Naive thymus-derived CD8-positive, alpha-beta T cell (primary cell): ENCODE measurements at regions of chr16 and their contacts with region 1.

Region 1: GRCh38 chr16:46973207-46973995 is at the start of gene DNAJA2:
- DNase-seq: peak; percentile 83 to 94 (median 93)
- ATAC-seq: peak; percentile 84 to 89
- H3K4me3 Mint-ChIP-seq: peak within 1 kb of the TSS; percentile 88 to 100 (median 96)
- H3K27ac Mint-ChIP-seq: peak within 1 kb of the TSS; percentile 93 to 100 (median 99)
- H3K4me1 Mint-ChIP-seq: peaks cover 17 to 60% (median 57%) of the 10 kb centered on the region in 4 donors
- H3K27me3 Mint-ChIP-seq: no peaks in the 10 kb centered on the region
- polyA plus RNA-seq, gene DNAJA2: 62.5 to 83.7 (median 62.8) TPM

Region 2: GRCh38 chr16:46757339-46758050 is 215.9 kb before region 1 on chr16:
- POLR2A ChIA-PET with region 1: no interaction called
- DNase-seq: no peak
- ATAC-seq: no peak
- H3K4me3 Mint-ChIP-seq: no peak overlapping the region
- H3K27ac Mint-ChIP-seq: no peak overlapping the region
- H3K4me1 Mint-ChIP-seq: no peaks in the 10 kb centered on the region
- H3K27me3 Mint-ChIP-seq: peaks cover 0 to 21% (median 4%) of the 10 kb centered on the region in 5 donors

Region 3: DNA sequence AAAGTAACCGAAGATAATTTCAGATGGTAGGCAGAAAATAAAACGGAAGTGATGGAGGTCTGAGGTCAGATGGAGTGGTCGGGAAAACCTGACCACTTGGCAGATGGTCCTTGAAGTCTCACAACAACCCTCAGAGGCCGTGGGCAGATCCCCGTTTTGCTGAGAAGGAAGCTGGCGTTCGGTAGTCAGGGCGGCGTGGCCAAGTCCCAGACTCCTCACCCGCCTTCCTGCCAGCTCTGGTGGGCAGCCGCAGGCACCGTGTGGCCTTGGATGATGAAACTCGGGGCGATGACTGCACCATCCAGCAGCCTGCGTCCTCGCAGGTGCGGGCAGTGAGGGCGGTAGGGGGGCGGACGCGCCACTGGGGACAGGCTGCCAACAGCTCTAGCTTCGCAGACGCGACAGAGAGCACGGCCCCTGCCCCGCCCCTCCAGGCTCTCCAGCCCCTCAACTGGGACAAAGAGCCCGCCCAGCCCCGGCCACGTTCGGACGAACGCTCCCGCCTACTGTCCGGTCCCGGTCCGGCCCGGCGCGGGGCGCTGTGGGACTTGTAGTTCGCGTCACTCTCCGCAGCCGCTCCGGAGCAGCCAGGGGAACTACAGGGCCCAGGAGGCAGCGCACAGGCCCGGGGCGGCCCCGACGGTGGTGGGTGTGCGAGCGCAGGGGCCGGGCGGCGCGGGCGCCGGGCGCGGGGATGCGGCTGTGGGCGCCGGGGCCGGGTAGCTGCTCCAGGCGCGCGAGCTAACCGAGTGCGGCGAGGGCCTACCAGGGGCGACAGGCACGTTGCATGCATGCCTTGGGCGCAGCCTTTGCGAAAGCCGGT is 89.5 kb before region 1 on chr16 and contains the start of gene GPT2:
- POLR2A ChIA-PET with region 1: interaction called, 10 read pairs
- DNase-seq: peak; percentile 25 to 76 (median 46)
- ATAC-seq: peak; percentile 89 to 95
- H3K4me3 Mint-ChIP-seq: peak within 1 kb of the TSS; percentile 79 to 95 (median 90)
- H3K27ac Mint-ChIP-seq: peak within 1 kb of the TSS in 7 of 10 donors; percentile 15 to 79 (median 61)
- H3K4me1 Mint-ChIP-seq: peaks cover 9 to 17% (median 13%) of the 10 kb centered on the region in 4 donors
- H3K27me3 Mint-ChIP-seq: peaks cover 2 to 30% (median 13%) of the 10 kb centered on the region in 5 donors
- polyA plus RNA-seq, gene GPT2: 0.19 to 0.23 TPM in 2 of 3 donors, not detected in the other

Region 4: DNA sequence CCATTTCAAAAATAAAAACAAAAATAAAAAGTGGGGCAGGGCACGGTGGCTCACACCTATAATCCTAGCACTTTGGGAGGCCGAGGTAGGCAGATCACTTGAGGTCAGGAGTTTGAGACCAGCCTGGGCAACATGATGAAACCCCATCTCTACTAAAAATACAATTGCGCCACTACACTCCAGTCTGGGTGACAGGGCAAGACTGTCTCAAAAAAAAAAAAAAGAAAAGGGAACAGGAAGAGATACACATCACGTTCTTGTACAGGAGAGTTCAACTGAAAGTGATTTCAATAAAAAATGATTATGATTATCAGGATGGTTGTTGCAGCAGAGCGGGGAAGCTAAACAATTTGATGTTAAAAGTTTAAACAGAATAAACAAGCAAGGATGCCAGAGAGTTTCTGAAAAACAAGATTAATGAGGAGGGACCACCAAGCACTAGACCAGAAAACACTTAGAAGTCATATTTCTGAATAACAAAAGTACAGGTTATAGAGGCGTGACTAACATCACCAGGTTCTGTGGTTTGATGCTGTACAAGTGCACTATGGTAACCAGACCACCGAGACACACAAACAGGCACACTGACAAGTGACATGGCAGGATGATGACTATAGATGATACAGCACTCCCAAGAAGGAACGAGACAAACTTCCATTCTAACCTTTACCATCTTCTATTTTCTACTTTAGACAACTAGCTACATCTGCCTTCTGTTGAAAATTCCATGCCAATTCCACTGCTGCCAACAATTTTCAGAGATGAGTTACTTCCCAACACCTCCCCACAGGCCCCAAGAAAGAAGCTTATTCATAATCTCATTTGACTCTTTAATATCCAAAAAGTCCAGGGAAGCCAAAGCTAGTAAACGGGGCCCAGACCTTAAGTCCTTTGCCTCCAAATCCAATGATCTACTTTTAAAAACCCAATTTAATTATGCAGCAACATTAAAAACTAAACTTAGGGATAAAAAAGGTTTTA is 11.7 kb before region 1 on chr16:
- POLR2A ChIA-PET with region 1: interaction called, 16 read pairs
- DNase-seq: peak in 6 of 10 donors; percentile 7 to 63 (median 44)
- ATAC-seq: peak; percentile 86 to 97
- H3K4me3 Mint-ChIP-seq: peak overlapping the region in 9 of 10 donors; percentile 21 to 65 (median 47)
- H3K27ac Mint-ChIP-seq: peak overlapping the region; percentile 82 to 96 (median 90)
- H3K4me1 Mint-ChIP-seq: peaks cover 23 to 44% (median 40%) of the 10 kb centered on the region in 4 donors
- H3K27me3 Mint-ChIP-seq: no peaks in the 10 kb centered on the region

Region 5: GRCh38 chr16:47037746-47038458 is 64.5 kb after region 1 on chr16:
- POLR2A ChIA-PET with region 1: interaction called, 15 read pairs
- DNase-seq: peak; percentile 73 to 92 (median 87)
- ATAC-seq: peak; percentile 96 to 97
- H3K4me3 Mint-ChIP-seq: peak overlapping the region; percentile 67 to 85 (median 76)
- H3K27ac Mint-ChIP-seq: peak overlapping the region in 2 of 10 donors; percentile 31 to 60
- H3K4me1 Mint-ChIP-seq: peaks cover 0 to 6% (median 1%) of the 10 kb centered on the region in 4 donors
- H3K27me3 Mint-ChIP-seq: peaks cover 0 to 4% (median 2%) of the 10 kb centered on the region in 5 donors

Region 6: GRCh38 chr16:47460711-47461597 is 487.6 kb after region 1 on chr16 and contains the starts of genes ITFG1 and PHKB:
- POLR2A ChIA-PET with region 1: interaction called, 11 read pairs
- DNase-seq: peak; percentile 92 to 97 (median 96)
- ATAC-seq: peak; percentile 94 to 97
- H3K4me3 Mint-ChIP-seq: peak within 1 kb of the TSS; percentile 90 to 99 (median 96)
- H3K27ac Mint-ChIP-seq: peak within 1 kb of the TSS; percentile 93 to 99 (median 97)
- H3K4me1 Mint-ChIP-seq: peaks cover 30 to 75% (median 68%) of the 10 kb centered on the region in 4 donors
- H3K27me3 Mint-ChIP-seq: no peaks in the 10 kb centered on the region
- polyA plus RNA-seq, gene ITFG1: 16.9 to 18.9 (median 18.3) TPM
- polyA plus RNA-seq, gene PHKB: 25.1 to 34.2 (median 25.4) TPM